ENCODE measurements at regions of chr16 and their contacts with region 1.

Region 1: GRCh38 chr16:89815639-89816348 is 653 bp downstream of the FANCA start:
- DNase-seq: no peak
- H3K4me3 ChIP-seq: peak overlapping the region; percentile 47 to 91 (median 89)
- H3K27ac ChIP-seq: peak overlapping the region; percentile 73
- H3K4me1 ChIP-seq: peaks cover 6% of the 10 kb centered on the region
- H3K27me3 ChIP-seq: no peaks in the 10 kb centered on the region
- CTCF ChIP-seq: no peak
- POLR2A ChIP-seq: no peak

Region 2: DNA sequence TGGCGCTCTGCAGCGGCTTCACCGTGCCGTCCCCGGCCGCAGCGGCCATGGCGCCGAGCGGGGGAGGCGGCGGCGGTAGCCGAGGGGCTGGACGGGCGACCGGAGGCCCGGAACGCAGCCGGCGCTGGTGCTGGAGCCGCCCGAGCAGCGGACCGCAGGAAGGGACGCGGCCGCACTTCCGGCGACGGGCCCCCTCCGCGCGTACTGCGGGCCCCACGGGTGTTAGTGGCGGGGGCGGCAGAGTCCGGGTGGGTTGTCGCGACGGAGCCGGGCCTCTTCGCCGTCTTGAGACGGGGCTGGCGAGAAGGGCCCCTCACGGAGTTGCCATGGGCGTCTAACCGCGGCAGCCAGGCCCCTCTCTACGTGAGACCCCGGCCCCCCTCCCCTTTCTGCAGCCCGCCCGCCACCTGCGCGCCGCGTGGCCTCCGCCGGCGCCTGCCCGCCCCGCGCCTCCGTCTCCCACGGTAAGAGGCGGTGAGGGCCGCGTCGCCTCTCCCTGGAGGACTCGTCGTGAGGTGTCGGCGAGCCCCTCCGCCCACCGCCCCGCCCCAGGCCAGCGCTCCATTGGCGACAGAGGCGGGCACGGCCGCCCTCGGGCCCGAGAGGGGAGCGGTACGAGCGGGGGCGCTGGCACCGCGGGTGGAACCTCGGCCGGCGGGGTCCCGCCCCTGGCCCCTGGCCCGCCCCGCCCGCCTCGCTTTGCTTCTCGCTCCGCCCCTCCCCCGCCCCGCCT is 94.8 kb before region 1 on chr16 and contains the starts of genes VPS9D1 and ZNF276:
- CTCF ChIA-PET with region 1: no interaction called
- POLR2A ChIA-PET with region 1: no interaction called
- dilution Hi-C with region 1: no loop called
- intact Hi-C with region 1: loop called (anchors 5 kb)
- DNase-seq: peak; percentile 79
- H3K4me3 ChIP-seq: peak within 1 kb of the TSS; percentile 57 to 76 (median 63)
- H3K27ac ChIP-seq: peak within 1 kb of the TSS; percentile 95
- H3K4me1 ChIP-seq: peaks cover 36% of the 10 kb centered on the region
- H3K27me3 ChIP-seq: no peaks in the 10 kb centered on the region
- CTCF ChIP-seq: no peak
- POLR2A ChIP-seq: peak; percentile 80
- total RNA-seq, gene VPS9D1: 15.5 and 18.3 TPM in 2 replicates
- total RNA-seq, gene ZNF276: 36.6 and 42.7 TPM in 2 replicates

Region 3: GRCh38 chr16:89828199-89828778 is 12.5 kb after region 1 on chr16 and contains the start of gene SPIRE2:
- CTCF ChIA-PET with region 1: interaction called, 4 read pairs
- POLR2A ChIA-PET with region 1: no interaction called
- dilution Hi-C with region 1: no loop called
- intact Hi-C with region 1: loop called (anchors 1 kb)
- DNase-seq: peak; percentile 77
- H3K4me3 ChIP-seq: peak within 1 kb of the TSS; percentile 50 to 64 (median 60)
- H3K27ac ChIP-seq: no peak within 1 kb of the TSS
- H3K4me1 ChIP-seq: peaks cover 9% of the 10 kb centered on the region
- H3K27me3 ChIP-seq: no peaks in the 10 kb centered on the region
- CTCF ChIP-seq: no peak
- POLR2A ChIP-seq: no peak
- total RNA-seq, gene SPIRE2: 2.4 and 3.1 TPM in 2 replicates

Region 4: GRCh38 chr16:89873972-89874689 is 58.3 kb after region 1 on chr16:
- CTCF ChIA-PET with region 1: no interaction called
- POLR2A ChIA-PET with region 1: no interaction called
- dilution Hi-C with region 1: no loop called
- intact Hi-C with region 1: loop called (anchors 1 kb)
- DNase-seq: peak; percentile 96
- H3K4me3 ChIP-seq: peak overlapping the region; percentile 76 to 85 (median 76)
- H3K27ac ChIP-seq: no peak overlapping the region
- H3K4me1 ChIP-seq: peaks cover 8% of the 10 kb centered on the region
- H3K27me3 ChIP-seq: no peaks in the 10 kb centered on the region
- CTCF ChIP-seq: no peak
- POLR2A ChIP-seq: no peak

Measured in endothelial cell of umbilical vein (primary cell).